ENCODE measurements at regions of chrX and their contacts with region 1.

Region 1: DNA sequence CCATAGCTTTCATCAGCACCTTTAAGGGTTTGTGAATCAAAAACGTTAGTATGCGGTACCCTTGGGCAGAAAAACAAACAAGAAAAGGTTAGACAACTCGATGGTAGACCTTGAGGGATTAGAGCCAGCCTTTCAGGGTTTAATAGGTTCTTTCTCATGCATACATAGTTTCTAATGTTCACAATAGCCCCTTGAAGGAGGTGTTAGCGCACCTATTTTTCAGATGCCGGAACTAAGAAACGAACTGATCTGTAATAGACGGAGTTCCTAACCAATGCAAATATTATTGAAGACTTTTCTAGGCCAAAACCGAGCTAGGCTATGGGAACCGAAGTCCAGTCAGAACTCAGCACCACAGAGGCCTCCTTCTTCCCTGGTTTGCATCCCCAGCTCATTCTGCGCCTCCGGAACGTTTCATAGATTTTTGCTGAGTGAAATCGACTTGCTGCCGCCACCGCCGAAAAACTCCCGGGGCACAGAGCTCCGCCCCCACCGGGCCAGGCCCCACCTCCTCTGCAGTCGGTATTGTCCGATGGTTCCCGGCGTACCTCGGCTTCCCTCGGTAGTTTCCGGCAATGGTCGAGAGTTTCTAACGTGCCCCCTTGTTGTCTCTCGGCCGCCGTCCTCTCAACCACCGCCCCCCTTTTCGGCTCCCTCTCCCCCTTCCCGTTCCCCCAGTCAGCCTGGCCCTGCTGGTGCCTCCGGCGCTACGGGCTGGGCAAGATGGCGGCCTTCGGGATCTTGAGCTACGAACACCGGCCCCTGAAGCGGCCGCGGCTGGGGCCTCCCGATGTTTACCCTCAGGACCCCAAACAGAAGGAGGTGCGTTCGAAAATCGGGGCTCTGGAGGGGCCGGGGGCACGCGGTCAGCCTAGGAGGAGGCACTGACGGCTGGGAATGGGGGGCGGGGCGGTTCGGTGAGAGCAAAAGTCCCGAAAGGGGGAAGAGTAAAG is at the start of gene MED12:
- DNase-seq: peak; percentile 52
- ATAC-seq: peak; percentile 99
- H3K4me3 ChIP-seq: peak within 1 kb of the TSS; percentile 85
- H3K27ac ChIP-seq: peak within 1 kb of the TSS; percentile 81
- H3K4me1 ChIP-seq: peaks cover 2% of the 10 kb centered on the region; the same call in 1 of the 2 replicates
- H3K27me3 ChIP-seq: no peaks in the 10 kb centered on the region
- CTCF ChIP-seq: no peak
- EP300 ChIP-seq: no peak
- POLR2A ChIP-seq: peak; percentile 67
- RAD21 ChIP-seq: no peak
- polyA plus RNA-seq, gene MED12: 0.68 to 1.7 TPM

Region 2: DNA sequence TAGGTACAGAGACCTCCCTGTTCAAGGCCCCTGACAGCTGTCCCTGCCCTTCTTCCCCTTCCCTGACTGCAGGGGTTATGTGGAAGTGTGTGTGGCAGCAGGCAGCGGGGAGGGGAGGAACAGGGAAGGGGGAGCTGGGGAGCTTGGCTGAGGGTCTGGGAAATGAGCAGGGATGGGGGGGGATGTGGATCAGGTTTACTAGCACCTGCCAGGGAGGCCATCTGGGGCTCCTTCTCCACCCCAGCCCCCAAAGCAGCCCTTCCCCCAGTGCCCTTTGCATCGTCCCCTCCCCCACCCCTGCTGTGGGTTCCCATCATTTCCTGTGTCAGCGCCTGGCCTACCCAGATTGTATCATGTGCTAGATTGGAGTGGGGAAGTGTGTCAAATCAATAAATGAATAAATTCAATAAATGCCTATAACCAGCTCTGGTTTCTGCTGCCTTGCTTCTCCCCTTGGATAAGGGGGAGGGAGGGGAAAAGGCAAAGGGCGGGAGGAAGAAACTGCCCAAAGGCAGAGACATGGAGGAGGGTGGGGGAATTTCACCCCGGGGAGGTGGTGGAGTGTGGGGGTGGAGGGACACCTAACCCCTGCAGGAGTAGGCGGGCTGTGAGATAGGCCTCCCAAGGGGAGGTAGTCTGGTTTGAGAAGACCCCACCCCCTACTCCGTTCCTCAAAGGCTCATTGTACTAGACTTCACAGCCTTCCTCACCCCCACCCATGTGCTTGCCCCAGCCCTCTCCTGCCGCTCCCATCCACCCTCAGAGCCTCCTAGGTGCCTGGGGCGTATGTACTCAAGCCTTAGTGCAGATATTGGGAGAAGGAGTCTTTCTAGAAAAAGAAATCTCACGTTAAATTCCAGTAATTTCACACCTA is 15.0 kb before region 1 on chrX:
- CTCF ChIA-PET with region 1: interaction called, 34 read pairs
- POLR2A ChIA-PET with region 1: interaction called, 60 read pairs
- RAD21 ChIA-PET with region 1: interaction called, 29 read pairs
- SMC1A ChIA-PET with region 1: interaction called, 44 read pairs
- in situ Hi-C with region 1: no loop called
- intact Hi-C with region 1: no loop called
- DNase-seq: no peak
- ATAC-seq: peak; percentile 76
- H3K4me3 ChIP-seq: peak overlapping the region; percentile 42
- H3K27ac ChIP-seq: peak overlapping the region; percentile 61
- H3K4me1 ChIP-seq: peaks cover 3% of the 10 kb centered on the region; the same call in 1 of the 2 replicates
- H3K27me3 ChIP-seq: no peaks in the 10 kb centered on the region
- CTCF ChIP-seq: no peak
- EP300 ChIP-seq: peak; percentile 26 to 43; a peak in 1 of 4 replicates
- POLR2A ChIP-seq: no peak; the same call in 1 of the 2 replicates
- RAD21 ChIP-seq: no peak